A673 (cell line): ENCODE measurements at regions of chr19 and their contacts with region 1.

Region 1: DNA sequence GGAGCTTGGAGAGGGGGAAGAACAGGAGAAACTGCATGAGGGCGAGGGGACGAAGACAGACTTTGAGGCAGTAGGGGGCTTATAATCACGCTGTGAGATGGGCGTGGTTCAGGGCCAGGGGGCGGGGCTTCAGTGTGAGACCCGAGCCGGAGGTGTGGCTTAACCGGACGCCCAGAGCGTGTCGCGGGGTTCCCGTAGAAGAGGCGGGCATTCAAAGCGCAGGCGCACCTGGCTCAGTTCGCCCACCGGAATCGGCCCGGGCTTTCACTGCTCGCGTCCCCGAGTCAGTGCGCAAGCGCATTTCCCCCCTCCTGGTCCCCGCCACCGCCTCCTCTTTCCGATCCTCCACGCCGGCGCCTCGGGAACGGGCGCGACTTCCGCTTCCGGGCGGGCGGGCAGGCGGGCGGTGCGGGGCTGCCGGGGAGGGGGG is 225 bp upstream of the ZNF865 start:
- DNase-seq: peak; percentile 99
- H3K4me3 ChIP-seq: peak overlapping the region; percentile 96
- H3K27ac ChIP-seq: peak overlapping the region; percentile 93
- H3K4me1 ChIP-seq: peaks cover 21% of the 10 kb centered on the region
- H3K27me3 ChIP-seq: no peaks in the 10 kb centered on the region
- CTCF ChIP-seq: no peak

Region 2: DNA sequence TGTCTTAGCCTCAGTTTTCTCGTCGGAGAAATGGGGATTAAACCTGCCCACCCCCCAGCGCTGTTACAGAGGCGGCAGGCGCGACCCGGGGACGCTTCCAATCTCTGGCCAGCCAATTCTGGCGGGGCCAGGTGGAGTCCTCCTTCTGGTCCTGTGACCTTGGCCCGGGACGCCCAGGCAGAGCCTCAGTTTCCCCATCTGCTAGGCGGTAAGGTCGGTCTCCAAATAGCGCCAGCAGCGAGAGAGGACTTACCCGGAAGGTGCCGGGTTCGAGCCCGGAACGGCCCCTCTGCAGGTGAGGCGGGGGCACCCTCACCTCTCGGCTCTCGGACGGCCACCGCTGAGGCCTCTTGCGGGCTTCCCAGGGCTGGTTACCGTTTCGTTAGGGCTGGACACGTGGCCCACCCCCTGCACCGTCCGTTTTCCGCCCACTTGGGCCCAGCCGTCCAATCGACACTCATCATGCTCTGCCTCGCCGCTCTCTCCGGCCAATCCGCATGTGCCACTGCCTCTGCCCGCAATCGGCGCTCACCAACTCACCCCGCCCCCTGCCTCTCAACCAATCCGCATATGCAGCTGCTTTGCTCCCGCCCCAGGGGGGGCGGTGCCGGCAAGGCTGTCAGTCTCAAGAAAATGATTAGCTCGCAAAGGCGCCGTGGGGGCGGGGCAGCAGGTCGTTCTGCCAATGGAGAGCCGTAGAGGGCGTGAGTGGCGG is 143.8 kb before region 1 on chr19 and contains the start of gene ISOC2:
- CTCF ChIA-PET with region 1: no interaction called
- POLR2A ChIA-PET with region 1: no interaction called
- intact Hi-C with region 1: loop called (anchors 5 kb)
- DNase-seq: peak; percentile 100
- H3K4me3 ChIP-seq: peak within 1 kb of the TSS; percentile 78
- H3K27ac ChIP-seq: peak within 1 kb of the TSS; percentile 91
- H3K4me1 ChIP-seq: peaks cover 38% of the 10 kb centered on the region
- H3K27me3 ChIP-seq: no peaks in the 10 kb centered on the region
- CTCF ChIP-seq: no peak
- total RNA-seq, gene ISOC2: 33.2 and 40.6 TPM in 2 replicates

Region 3: GRCh38 chr19:55516878-55517620 is 88.2 kb before region 1 on chr19:
- CTCF ChIA-PET with region 1: interaction called, 6 read pairs
- POLR2A ChIA-PET with region 1: no interaction called
- intact Hi-C with region 1: loop called (anchors 1 kb)
- DNase-seq: peak; percentile 93
- H3K4me3 ChIP-seq: peak overlapping the region; percentile 48
- H3K27ac ChIP-seq: peak overlapping the region; percentile 75
- H3K4me1 ChIP-seq: no peaks in the 10 kb centered on the region
- H3K27me3 ChIP-seq: no peaks in the 10 kb centered on the region
- CTCF ChIP-seq: peak; percentile 93

Region 4: GRCh38 chr19:55653758-55654539 is 48.7 kb after region 1 on chr19:
- CTCF ChIA-PET with region 1: no interaction called
- POLR2A ChIA-PET with region 1: no interaction called
- intact Hi-C with region 1: no loop called
- DNase-seq: peak; percentile 100
- H3K4me3 ChIP-seq: peak overlapping the region; percentile 83
- H3K27ac ChIP-seq: peak overlapping the region; percentile 99
- H3K4me1 ChIP-seq: peaks cover 25% of the 10 kb centered on the region
- H3K27me3 ChIP-seq: no peaks in the 10 kb centered on the region
- CTCF ChIP-seq: peak; percentile 99